GM18951 (cell line): ENCODE measurements at regions of chr12 and their contacts with region 1.

Region 1: DNA sequence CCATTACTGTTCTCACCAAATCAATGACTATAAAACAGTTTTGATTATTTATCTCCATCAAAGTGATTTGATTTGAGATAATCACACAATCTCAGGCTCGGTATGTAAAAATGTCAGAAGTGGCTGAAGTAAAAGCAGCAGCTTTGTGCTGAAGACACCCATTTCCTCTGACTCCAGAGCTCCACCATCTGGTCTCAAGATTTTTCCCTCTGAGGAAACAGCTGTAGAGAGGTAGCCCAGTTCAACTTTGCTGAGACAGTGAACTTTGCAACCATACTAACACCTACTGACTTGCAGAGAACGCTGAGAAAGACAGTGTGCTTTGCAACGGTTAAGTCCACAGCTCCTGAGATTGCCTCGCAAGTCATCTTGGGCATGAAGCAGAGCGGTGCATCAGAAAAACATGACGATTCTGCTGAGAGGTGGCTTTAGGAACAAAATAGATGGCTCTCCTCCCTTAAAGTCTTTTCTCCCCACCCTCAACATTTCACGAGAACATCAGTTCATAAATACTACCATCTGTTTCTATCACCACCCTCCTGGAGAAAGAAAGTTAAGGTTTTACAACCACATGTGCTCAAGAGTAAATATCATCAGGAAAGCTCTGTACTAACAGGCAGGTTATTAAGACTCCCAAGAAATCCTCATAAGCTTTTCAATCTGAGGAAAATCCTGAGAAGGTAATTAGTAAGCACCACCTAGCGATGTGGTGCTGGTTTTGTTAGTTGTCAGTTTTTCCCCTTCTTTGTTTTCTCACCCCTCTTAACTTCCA is 34.8 kb downstream of the HIGD1C start:
- POLR2A ChIP-seq: no peak

Region 2: GRCh38 chr12:50825372-50825838 is 161.7 kb before region 1 on chr12:
- in situ Hi-C with region 1: loop called (anchors 10 kb)
- POLR2A ChIP-seq: no peak

Region 3: DNA sequence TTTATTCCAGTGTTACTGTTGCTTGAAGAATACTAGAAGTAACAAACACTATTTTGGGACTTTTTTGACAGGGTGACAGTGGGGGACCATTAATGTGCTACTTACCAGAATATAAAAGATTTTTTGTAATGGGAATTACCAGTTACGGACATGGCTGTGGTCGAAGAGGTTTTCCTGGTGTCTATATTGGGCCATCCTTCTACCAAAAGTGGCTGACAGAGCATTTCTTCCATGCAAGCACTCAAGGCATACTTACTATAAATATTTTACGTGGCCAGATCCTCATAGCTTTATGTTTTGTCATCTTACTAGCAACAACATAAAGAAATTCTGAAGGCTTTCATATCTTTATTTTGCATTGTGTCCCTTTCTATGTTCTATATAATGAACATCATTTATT is 100.0 kb before region 1 on chr12:
- in situ Hi-C with region 1: no loop called
- POLR2A ChIP-seq: no peak

Region 4: GRCh38 chr12:51077971-51078370 is 90.8 kb after region 1 on chr12:
- in situ Hi-C with region 1: no loop called
- POLR2A ChIP-seq: no peak